ENCODE measurements at regions of chr1 and their contacts with region 1.

Region 1: GRCh38 chr1:200154069-200154767 is 126.7 kb downstream of the NR5A2 start:
- DNase-seq: peak in 8 of 9 donors; percentile 26 to 65 (median 50)
- ATAC-seq: peak; percentile 88
- H3K4me3 ChIP-seq: no peak overlapping the region
- H3K4me3 Mint-ChIP-seq: peak overlapping the region; percentile 45 to 87 (median 67)
- H3K27ac ChIP-seq: peak overlapping the region; percentile 64
- H3K27ac Mint-ChIP-seq: peak overlapping the region; percentile 74 to 99 (median 89)
- H3K4me1 ChIP-seq: peaks cover 27 to 30% of the 10 kb centered on the region in 2 donors
- H3K4me1 Mint-ChIP-seq: peaks cover 18 to 54% (median 29%) of the 10 kb centered on the region in 7 donors
- H3K27me3 ChIP-seq: no peaks in the 10 kb centered on the region
- H3K27me3 Mint-ChIP-seq: peaks cover 0 to 2% (median 0%) of the 10 kb centered on the region in 5 donors

Region 2: DNA sequence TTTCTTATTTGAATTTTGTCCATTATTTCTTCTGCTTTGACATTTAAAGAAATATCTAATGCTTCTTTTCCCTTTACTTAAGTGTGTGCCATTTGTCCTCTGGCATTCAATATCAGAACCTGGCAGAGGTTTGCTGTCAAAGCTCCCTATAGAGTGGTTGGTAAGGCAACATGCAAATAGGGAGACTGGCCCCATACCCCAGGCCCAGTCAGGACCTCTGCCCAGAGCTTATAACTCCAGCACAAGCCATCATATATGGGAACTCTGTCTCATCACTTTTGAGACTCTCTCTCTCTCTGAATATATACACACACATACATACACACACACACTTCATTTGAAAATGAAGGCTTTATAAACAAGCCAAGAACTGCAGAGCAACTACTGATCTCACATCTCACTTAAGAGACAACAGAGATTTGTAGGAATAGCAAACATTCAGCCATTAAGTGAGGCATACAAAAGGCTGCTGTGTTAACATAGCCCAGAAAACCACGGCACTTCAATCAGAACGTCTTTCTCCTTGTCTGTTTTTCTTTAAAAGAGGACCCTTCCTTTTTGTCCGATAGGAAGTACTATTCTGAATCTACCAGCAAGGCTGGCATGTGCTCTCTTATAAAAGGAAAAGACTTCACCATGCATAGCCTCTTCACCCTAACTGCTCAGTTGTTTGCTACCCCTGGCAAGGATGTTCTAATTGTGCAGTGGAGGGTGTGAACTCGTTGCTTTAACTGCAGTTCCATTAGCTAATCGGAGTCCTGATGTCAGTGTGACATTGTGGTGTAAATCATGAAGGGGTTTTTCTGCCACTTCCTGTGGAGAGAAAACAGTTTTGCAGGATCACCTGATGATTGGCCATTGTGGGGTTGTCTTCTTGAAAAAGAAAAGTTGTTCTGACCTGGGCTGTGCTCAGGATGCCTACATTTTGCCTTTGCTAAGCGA is 25.0 kb before region 1 on chr1:
- CTCF ChIA-PET with region 1: no interaction called
- POLR2A ChIA-PET with region 1: no interaction called
- intact Hi-C with region 1: loop called in 1 of 2 experiments (anchors 1 kb)
- DNase-seq: peak in 3 of 9 donors; percentile 11 to 34 (median 31)
- ATAC-seq: peak; percentile 84
- H3K4me3 ChIP-seq: no peak overlapping the region
- H3K4me3 Mint-ChIP-seq: peak overlapping the region in 3 of 10 donors; percentile 2 to 63 (median 32)
- H3K27ac ChIP-seq: no peak overlapping the region
- H3K27ac Mint-ChIP-seq: peak overlapping the region in 4 of 9 donors; percentile 2 to 83 (median 39)
- H3K4me1 ChIP-seq: peaks cover 6 to 18% of the 10 kb centered on the region in 2 donors
- H3K4me1 Mint-ChIP-seq: peaks cover 0 to 20% (median 14%) of the 10 kb centered on the region in 7 donors
- H3K27me3 ChIP-seq: no peaks in the 10 kb centered on the region
- H3K27me3 Mint-ChIP-seq: peaks cover 0 to 3% (median 0%) of the 10 kb centered on the region in 5 donors

Region 3: GRCh38 chr1:200231787-200232231 is 77.6 kb after region 1 on chr1:
- CTCF ChIA-PET with region 1: no interaction called
- POLR2A ChIA-PET with region 1: no interaction called
- intact Hi-C with region 1: no loop called
- DNase-seq: no peak
- ATAC-seq: no peak
- H3K4me3 ChIP-seq: no peak overlapping the region
- H3K4me3 Mint-ChIP-seq: no peak overlapping the region
- H3K27ac ChIP-seq: no peak overlapping the region
- H3K27ac Mint-ChIP-seq: no peak overlapping the region
- H3K4me1 ChIP-seq: no peaks in the 10 kb centered on the region
- H3K4me1 Mint-ChIP-seq: peaks cover 2 to 8% (median 2%) of the 10 kb centered on the region in 7 donors
- H3K27me3 ChIP-seq: no peaks in the 10 kb centered on the region
- H3K27me3 Mint-ChIP-seq: peaks cover 4 to 27% (median 6%) of the 10 kb centered on the region in 5 donors

Region 4: GRCh38 chr1:200242110-200243041 is 88.2 kb after region 1 on chr1:
- CTCF ChIA-PET with region 1: no interaction called
- POLR2A ChIA-PET with region 1: no interaction called
- intact Hi-C with region 1: loop called in 1 of 2 experiments (anchors 5 kb)
- DNase-seq: no peak
- ATAC-seq: peak; percentile 24
- H3K4me3 ChIP-seq: no peak overlapping the region
- H3K4me3 Mint-ChIP-seq: no peak overlapping the region
- H3K27ac ChIP-seq: no peak overlapping the region
- H3K27ac Mint-ChIP-seq: no peak overlapping the region
- H3K4me1 ChIP-seq: no peaks in the 10 kb centered on the region
- H3K4me1 Mint-ChIP-seq: peaks cover 4 to 17% (median 11%) of the 10 kb centered on the region in 7 donors
- H3K27me3 ChIP-seq: no peaks in the 10 kb centered on the region
- H3K27me3 Mint-ChIP-seq: peaks cover 9 to 50% (median 29%) of the 10 kb centered on the region in 5 donors

Region 5: DNA sequence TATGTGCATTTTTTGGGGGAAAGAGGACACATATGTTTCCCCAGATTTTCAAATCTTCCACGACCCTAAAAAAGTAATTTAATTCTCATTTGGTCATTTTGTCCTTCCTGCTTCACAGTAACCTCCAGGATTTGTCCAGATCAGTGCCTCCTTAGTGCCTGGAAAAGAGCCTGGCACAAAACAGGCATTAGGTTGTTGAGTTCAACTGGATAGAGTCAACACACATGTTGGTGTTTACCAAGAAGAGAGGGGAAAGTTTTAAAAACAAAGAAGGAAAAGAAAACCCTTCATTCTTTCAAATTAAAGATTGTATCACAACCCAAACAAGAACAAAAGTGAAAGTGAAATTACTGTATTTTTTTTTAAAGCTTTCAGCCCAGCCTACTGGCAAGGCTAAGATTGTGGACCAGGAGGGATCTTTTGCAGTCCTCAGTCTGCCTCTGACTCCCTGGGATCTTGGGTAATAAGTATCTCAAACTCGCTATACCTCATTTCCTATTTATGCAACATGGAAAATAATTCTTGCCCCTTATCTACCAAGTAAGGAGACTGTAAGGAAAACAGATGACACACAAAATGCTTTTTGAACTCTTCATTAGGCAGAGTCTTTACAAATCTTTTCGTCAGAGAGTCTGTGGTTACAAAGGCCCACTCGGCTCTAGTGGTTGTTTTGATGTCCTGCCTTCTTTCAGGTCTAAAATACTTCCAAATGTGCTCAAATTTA is 197.8 kb after region 1 on chr1:
- CTCF ChIA-PET with region 1: no interaction called
- POLR2A ChIA-PET with region 1: no interaction called
- intact Hi-C with region 1: loop called in 1 of 2 experiments (anchors 5 kb)
- DNase-seq: peak in 7 of 9 donors; percentile 14 to 49 (median 39)
- ATAC-seq: peak; percentile 77
- H3K4me3 ChIP-seq: peak overlapping the region; percentile 41
- H3K4me3 Mint-ChIP-seq: peak overlapping the region; percentile 65 to 88 (median 82)
- H3K27ac ChIP-seq: peak overlapping the region; percentile 43
- H3K27ac Mint-ChIP-seq: peak overlapping the region; percentile 80 to 95 (median 91)
- H3K4me1 ChIP-seq: peaks cover 8 to 16% of the 10 kb centered on the region in 2 donors
- H3K4me1 Mint-ChIP-seq: peaks cover 21 to 45% (median 31%) of the 10 kb centered on the region in 7 donors
- H3K27me3 ChIP-seq: no peaks in the 10 kb centered on the region
- H3K27me3 Mint-ChIP-seq: no peaks in the 10 kb centered on the region

Region 6: GRCh38 chr1:201916649-201917249 is 1762.5 kb after region 1 on chr1:
- CTCF ChIA-PET with region 1: no interaction called
- POLR2A ChIA-PET with region 1: no interaction called
- intact Hi-C with region 1: no loop called
- DNase-seq: no peak
- ATAC-seq: no peak
- H3K4me3 ChIP-seq: no peak overlapping the region
- H3K4me3 Mint-ChIP-seq: no peak overlapping the region
- H3K27ac ChIP-seq: no peak overlapping the region
- H3K27ac Mint-ChIP-seq: peak overlapping the region in 1 of 9 donors; percentile 45
- H3K4me1 ChIP-seq: no peaks in the 10 kb centered on the region
- H3K4me1 Mint-ChIP-seq: no peaks in the 10 kb centered on the region
- H3K27me3 ChIP-seq: no peaks in the 10 kb centered on the region
- H3K27me3 Mint-ChIP-seq: peaks cover 0 to 24% (median 15%) of the 10 kb centered on the region in 5 donors

Measured in naive thymus-derived CD4-positive, alpha-beta T cell (primary cell).